Ascending aorta (tissue), 2 donors: ENCODE measurements at regions of chr2 and their contacts with region 1.

Region 1: GRCh38 chr2:48248241-48248933 is 281.6 kb upstream of the STON1 start:
- DNase-seq: no peak
- H3K4me3 ChIP-seq: no peak overlapping the region
- H3K27ac ChIP-seq: peak overlapping the region; percentile 27 to 64
- H3K4me1 ChIP-seq: peaks cover 5 to 20% of the 10 kb centered on the region in 2 donors
- H3K27me3 ChIP-seq: no peaks in the 10 kb centered on the region
- CTCF ChIP-seq: no peak

Region 2: DNA sequence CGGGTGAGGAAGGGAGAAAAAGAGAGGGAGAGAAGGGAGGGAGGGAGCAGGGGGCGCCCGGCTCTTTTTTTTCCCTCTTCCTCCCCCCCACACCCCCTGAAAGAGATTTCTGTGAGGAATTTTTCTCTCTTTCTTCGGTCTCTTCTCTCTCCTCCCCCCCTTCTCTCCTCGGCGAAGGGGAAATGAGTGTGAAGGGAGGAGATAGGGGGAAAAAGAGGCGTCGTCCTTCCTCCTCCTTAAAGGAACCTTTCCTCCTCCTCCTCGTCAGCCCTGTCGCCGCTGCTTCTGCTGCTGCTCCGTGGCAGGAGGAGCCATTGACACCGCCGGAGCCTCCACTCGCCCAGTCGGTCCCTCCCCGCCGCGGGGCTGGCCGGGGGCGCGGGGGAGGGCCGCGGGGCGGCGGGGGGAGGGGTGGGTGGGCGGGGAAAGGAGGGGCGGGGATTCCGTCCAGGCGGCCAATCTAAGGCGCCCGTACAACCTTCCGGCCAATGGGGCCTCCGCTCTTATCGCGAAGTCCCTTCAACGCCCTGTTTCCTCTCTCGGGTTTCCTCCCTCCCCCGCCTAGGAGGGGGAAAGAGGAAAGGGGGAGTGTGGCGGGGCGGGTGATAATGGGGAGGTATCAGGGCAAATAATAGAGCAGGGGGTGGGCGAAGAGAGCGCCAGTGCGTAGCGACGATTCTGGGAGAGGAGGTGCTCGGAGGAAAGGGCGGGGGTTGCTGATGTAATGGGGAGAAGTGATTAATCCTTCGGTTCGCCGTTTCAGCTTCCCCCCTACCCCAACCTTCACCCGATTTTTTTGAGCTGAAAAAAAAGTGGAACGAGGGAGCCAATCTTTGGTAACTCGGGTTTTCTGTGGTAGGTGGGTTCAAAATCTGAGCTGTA is 342.0 kb before region 1 on chr2 and contains the start of gene FBXO11:
- intact Hi-C with region 1: loop called (anchors 5 kb)
- DNase-seq: peak; percentile 96 to 99
- H3K4me3 ChIP-seq: peak within 1 kb of the TSS; percentile 99 to 100
- H3K27ac ChIP-seq: peak within 1 kb of the TSS; percentile 99 to 100
- H3K4me1 ChIP-seq: peaks cover 0 to 12% of the 10 kb centered on the region in 2 donors
- H3K27me3 ChIP-seq: no peaks in the 10 kb centered on the region
- CTCF ChIP-seq: peak; percentile 53 to 67 (median 65)
- total RNA-seq, gene FBXO11: 15.1 TPM

Region 3: GRCh38 chr2:48227617-48228344 is 20.6 kb before region 1 on chr2:
- intact Hi-C with region 1: no loop called
- DNase-seq: no peak
- H3K4me3 ChIP-seq: no peak overlapping the region
- H3K27ac ChIP-seq: no peak overlapping the region
- H3K4me1 ChIP-seq: no peaks in the 10 kb centered on the region
- H3K27me3 ChIP-seq: no peaks in the 10 kb centered on the region
- CTCF ChIP-seq: no peak

Region 4: DNA sequence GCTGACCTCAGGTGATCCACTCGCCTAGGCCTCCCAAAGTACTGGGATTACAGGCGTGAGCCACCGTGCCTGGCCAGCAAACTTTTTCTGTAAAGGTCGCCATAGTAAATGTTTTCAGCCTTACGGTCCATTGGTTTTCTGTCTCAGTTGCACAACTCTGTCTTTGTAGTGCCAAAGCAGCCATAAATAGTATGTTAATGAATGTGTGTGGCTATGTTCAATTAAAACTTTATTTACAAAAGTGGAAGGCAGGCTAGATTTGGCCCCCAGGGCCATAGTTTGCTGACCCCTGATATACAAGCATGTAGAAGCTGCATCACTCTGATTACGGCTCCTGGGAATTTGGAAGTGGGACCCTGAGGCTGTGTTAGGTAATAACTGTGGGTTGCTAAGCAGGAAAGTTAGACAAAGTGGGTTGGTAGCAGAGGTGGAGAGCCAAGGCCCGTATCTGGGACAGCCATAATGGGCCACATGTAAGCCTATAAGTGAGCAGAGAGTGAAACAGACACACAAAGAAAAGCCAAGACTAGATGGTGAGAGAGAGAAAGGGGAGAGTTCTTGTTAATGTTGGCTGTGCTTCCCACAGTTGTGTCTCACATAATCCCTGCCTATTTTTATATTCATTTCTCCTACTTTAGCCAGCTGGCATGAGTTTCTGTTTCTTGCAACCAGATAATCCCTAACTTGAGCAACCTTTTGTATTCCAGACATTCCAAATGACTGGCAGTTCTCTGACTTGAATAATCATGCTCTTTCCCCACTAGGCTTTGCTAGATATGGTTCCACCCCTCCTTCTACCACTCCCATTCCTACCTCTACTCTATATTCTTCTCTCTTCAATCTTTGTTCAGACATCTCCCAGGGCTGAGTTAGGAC is 58.3 kb after region 1 on chr2:
- intact Hi-C with region 1: loop called (anchors 2 kb)
- DNase-seq: no peak
- H3K4me3 ChIP-seq: no peak overlapping the region
- H3K27ac ChIP-seq: peak overlapping the region; percentile 69 to 73
- H3K4me1 ChIP-seq: peaks cover 0 to 15% of the 10 kb centered on the region in 2 donors
- H3K27me3 ChIP-seq: no peaks in the 10 kb centered on the region
- CTCF ChIP-seq: no peak

Region 5: DNA sequence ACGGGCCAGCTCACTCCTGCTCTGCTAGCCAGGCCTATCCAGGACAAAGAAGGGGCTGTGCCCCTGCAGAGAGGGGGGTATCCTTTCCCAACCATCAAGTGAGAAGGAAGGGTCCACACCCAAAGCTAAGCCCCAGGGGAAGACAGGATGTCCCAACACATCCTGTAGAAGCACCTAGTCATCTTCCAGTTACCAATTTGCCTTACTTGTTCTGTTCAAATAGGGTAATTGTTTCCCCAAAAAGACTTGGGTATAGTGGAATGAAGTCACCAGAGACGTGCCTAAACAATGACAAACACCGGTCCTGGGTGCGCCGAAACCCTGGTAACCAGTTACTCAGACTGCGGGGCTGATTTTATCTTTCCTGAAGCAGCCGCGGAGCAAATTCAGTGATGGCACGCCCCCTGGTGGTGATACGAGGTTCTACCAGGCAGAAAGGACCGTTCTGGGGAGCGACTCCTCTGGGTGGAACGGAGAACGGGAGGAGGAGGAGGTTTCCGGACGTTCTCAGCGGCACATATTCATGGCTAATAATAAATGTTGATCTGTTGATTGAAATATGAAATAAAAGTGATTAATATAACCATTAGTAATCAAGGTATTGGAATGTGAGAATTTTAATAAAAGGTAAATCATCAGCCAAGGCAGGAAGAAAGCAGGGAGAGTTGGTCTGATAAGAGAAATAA is 172.3 kb after region 1 on chr2:
- intact Hi-C with region 1: loop called (anchors 1 kb)
- DNase-seq: peak; percentile 68 to 95
- H3K4me3 ChIP-seq: peak overlapping the region in 1 of 2 donors; percentile 21
- H3K27ac ChIP-seq: no peak overlapping the region
- H3K4me1 ChIP-seq: peaks cover 2 to 3% of the 10 kb centered on the region in 2 donors
- H3K27me3 ChIP-seq: no peaks in the 10 kb centered on the region
- CTCF ChIP-seq: peak; percentile 95 to 98 (median 96)